Naive thymus-derived CD8-positive, alpha-beta T cell (primary cell): ENCODE measurements at regions of chr11 and their contacts with region 1.

Region 1: GRCh38 chr11:121482231-121483129 is 29.7 kb upstream of the SORL1-AS1 start:
- DNase-seq: peak; percentile 25 to 79 (median 61)
- ATAC-seq: peak; percentile 86 to 88
- H3K4me3 Mint-ChIP-seq: peak overlapping the region; percentile 66 to 91 (median 86)
- H3K27ac Mint-ChIP-seq: peak overlapping the region; percentile 73 to 97 (median 94)
- H3K4me1 Mint-ChIP-seq: peaks cover 38 to 80% (median 72%) of the 10 kb centered on the region in 4 donors
- H3K27me3 Mint-ChIP-seq: no peaks in the 10 kb centered on the region

Region 2: GRCh38 chr11:121464352-121464946 is 18.0 kb before region 1 on chr11:
- POLR2A ChIA-PET with region 1: interaction called, 28 read pairs
- DNase-seq: peak; percentile 38 to 85 (median 60)
- ATAC-seq: peak; percentile 65 to 66
- H3K4me3 Mint-ChIP-seq: peak overlapping the region; percentile 65 to 97 (median 74)
- H3K27ac Mint-ChIP-seq: peak overlapping the region; percentile 78 to 99 (median 95)
- H3K4me1 Mint-ChIP-seq: peaks cover 60 to 100% (median 100%) of the 10 kb centered on the region in 4 donors
- H3K27me3 Mint-ChIP-seq: no peaks in the 10 kb centered on the region